ENCODE measurements at regions of chr1 and their contacts with region 1.

Region 1: GRCh38 chr1:31789259-31790065 is 25.3 kb upstream of the ADGRB2 start:
- DNase-seq: peak; percentile 77 to 98
- H3K4me3 ChIP-seq: peak overlapping the region; percentile 62 to 71
- H3K27ac ChIP-seq: peak overlapping the region; percentile 73 to 80
- H3K4me1 ChIP-seq: peaks cover 0 to 7% of the 10 kb centered on the region in 2 donors
- H3K27me3 ChIP-seq: no peaks in the 10 kb centered on the region
- CTCF ChIP-seq: peak; percentile 90 to 99 (median 98)

Region 2: DNA sequence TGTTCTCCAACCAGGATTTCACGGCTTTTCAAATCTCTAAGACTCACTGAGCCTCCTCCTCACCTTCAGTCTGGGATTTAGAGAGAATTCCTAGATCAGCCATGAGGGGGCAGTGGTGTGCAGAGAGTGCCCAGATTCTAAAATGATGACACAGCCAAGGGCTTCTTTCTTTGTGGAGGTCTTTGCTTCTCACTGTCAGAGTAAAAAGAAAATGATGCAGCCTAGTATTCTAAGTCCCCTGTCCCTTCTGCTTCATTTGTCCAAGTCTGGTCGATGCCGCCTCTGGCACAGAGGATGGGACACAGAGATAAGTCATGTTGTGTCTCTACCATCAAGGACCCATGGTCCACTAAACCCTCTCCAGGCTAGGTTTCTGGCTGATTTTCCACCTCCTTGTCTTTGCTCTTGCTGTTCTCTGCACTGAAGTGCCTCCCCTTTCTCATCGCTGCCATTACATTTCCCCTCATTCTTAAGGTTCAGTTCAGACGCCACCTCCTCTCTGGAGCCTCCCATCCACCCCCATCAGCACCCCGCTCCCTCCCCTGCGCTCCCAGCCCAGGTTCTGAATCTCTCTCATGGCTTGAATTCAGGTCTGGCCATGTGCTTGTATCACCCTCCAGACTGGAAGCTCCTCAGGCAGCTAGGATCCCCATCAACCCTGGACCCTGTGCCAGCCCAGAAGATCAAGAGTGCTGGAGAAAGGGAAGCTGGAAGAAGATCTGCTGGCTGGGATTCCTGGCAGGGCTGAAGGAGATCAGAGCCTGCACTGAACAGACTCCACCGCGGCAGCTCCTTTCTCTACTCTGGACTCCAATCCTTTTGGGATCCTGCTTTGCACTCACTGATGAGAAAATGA is 225.1 kb before region 1 on chr1:
- intact Hi-C with region 1: loop called (anchors 2 kb)
- DNase-seq: peak in 1 of 2 donors; percentile 81
- H3K4me3 ChIP-seq: no peak overlapping the region
- H3K27ac ChIP-seq: peak overlapping the region; percentile 2 to 58
- H3K4me1 ChIP-seq: peaks cover 0 to 32% of the 10 kb centered on the region in 2 donors
- H3K27me3 ChIP-seq: no peaks in the 10 kb centered on the region
- CTCF ChIP-seq: peak; percentile 79 to 92 (median 90)

Region 3: DNA sequence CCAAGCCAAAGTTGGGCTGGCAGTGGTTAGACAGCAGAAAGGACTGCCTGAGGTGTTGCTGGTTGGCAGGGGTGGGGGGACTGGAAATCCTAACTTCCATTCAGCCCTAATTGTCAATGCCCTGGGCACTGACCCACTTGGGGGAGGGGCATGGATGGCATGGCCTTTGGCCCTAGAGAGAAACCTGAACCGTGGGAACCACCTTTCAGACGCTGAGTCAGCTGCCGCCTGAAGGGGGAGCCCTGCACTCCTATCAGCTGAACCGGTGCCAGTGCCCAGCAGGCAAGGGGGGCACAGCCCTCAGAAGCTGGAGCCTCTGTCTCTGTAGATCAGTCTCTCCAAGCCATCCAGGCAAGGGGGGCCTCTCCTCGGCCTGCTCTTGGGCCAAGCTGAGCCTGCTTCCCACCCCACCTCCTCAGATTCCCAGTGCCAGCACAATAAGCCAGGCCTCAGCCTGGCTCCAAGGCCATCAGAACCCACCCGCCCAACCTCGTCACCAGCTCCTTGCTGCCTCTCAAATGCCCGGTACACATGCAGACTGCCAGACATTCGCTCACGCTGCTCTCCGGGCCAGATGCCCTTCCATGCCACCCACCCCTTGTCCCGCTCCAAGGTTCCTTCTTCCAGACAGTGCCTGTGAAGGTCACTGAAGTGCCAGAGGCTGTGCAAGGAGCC is 201.6 kb before region 1 on chr1:
- intact Hi-C with region 1: loop called (anchors 2 kb)
- DNase-seq: peak; percentile 70 to 94
- H3K4me3 ChIP-seq: peak overlapping the region; percentile 46 to 56
- H3K27ac ChIP-seq: peak overlapping the region; percentile 93 to 97
- H3K4me1 ChIP-seq: peaks cover 45 to 77% of the 10 kb centered on the region in 2 donors
- H3K27me3 ChIP-seq: no peaks in the 10 kb centered on the region
- CTCF ChIP-seq: peak; percentile 28 to 69 (median 65)

Region 4: DNA sequence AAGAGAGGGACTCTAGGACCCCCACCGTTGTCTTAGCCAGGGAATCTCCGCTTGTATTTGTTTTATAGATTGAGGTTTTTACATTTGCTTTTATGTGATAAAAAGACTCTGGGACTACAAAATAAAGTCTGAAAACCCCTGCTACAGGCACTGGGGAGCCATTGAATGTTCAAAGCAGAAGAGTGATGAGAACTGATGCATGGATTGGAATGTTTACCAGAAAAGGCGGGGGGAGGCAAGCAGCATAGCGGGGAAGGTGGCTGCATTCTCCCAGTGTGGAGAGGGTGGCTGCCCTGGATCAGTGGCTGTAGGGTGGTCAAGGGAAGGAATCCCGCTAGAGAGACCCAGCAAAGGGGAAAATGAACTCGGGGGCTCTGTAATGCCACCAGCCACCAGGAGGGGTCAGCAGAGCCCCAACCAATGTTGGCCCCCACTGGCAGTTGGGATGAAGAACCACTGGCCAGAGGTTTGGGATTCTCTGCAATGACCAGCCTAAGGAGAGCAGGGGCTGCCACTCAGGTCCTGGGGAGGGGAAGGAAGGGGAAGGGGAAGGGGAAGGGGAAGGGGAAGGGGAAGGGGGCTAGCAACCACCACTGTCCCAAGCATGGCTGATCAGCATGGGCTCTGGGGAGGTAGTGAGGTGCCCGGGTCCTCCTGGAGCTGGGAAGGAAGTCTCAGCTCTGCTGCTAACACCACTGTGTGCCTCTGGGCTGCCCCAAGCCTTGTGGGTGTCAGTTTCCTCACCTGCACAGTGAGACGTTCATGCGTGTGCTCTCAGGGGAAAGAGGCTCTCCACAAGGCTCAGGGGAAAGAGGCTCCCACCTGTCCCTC is 125.6 kb before region 1 on chr1:
- intact Hi-C with region 1: loop called (anchors 1 kb)
- DNase-seq: peak in 1 of 2 donors; percentile 81
- H3K4me3 ChIP-seq: no peak overlapping the region
- H3K27ac ChIP-seq: no peak overlapping the region
- H3K4me1 ChIP-seq: peaks cover 0 to 3% of the 10 kb centered on the region in 2 donors
- H3K27me3 ChIP-seq: no peaks in the 10 kb centered on the region
- CTCF ChIP-seq: peak; percentile 89 to 98 (median 90)

Region 5: GRCh38 chr1:31701137-31701736 is 88.2 kb before region 1 on chr1:
- intact Hi-C with region 1: no loop called
- DNase-seq: peak; percentile 57 to 95
- H3K4me3 ChIP-seq: peak overlapping the region in 1 of 2 donors; percentile 65
- H3K27ac ChIP-seq: peak overlapping the region; percentile 90 to 94
- H3K4me1 ChIP-seq: peaks cover 8 to 63% of the 10 kb centered on the region in 2 donors
- H3K27me3 ChIP-seq: no peaks in the 10 kb centered on the region
- CTCF ChIP-seq: no peak

Region 6: GRCh38 chr1:31745096-31745945 is 44.1 kb before region 1 on chr1:
- intact Hi-C with region 1: loop called (anchors 5 kb)
- DNase-seq: peak in 1 of 2 donors; percentile 81
- H3K4me3 ChIP-seq: no peak overlapping the region
- H3K27ac ChIP-seq: no peak overlapping the region
- H3K4me1 ChIP-seq: peaks cover 0 to 3% of the 10 kb centered on the region in 2 donors
- H3K27me3 ChIP-seq: no peaks in the 10 kb centered on the region
- CTCF ChIP-seq: peak; percentile 39 to 75 (median 66)

Region 7: GRCh38 chr1:31762726-31763670 is 26.5 kb before region 1 on chr1:
- intact Hi-C with region 1: loop called (anchors 1 kb)
- DNase-seq: peak in 1 of 2 donors; percentile 82
- H3K4me3 ChIP-seq: peak overlapping the region; percentile 63 to 86
- H3K27ac ChIP-seq: no peak overlapping the region
- H3K4me1 ChIP-seq: peaks cover 10 to 31% of the 10 kb centered on the region in 2 donors
- H3K27me3 ChIP-seq: no peaks in the 10 kb centered on the region
- CTCF ChIP-seq: peak; percentile 62 to 73 (median 68)

Region 8: DNA sequence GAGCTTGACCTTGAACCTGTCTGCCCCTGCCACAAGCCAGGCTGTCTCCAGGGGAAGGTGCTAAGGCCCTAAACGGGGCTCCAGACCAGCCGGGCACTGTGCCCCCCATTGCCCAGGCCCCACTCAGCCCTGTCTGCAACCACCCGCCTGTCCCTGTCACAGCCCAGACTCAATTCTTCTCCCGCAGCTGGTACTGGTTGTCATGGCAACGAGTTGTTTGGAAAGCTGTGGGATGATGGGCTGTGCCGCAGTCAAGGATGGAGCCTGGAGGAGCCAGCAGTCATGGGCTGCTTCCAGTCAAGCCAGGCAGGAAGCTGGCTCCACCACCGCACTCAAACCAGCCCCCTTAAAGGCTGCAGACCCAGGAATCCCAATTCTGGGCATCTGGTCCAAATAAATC is 22.1 kb after region 1 on chr1:
- intact Hi-C with region 1: no loop called
- DNase-seq: peak in 1 of 2 donors; percentile 52
- H3K4me3 ChIP-seq: no peak overlapping the region
- H3K27ac ChIP-seq: no peak overlapping the region
- H3K4me1 ChIP-seq: no peaks in the 10 kb centered on the region
- H3K27me3 ChIP-seq: no peaks in the 10 kb centered on the region
- CTCF ChIP-seq: no peak

Region 9: GRCh38 chr1:31822766-31823165 is 33.3 kb after region 1 on chr1:
- intact Hi-C with region 1: no loop called
- DNase-seq: no peak
- H3K4me3 ChIP-seq: no peak overlapping the region
- H3K27ac ChIP-seq: no peak overlapping the region
- H3K4me1 ChIP-seq: no peaks in the 10 kb centered on the region
- H3K27me3 ChIP-seq: no peaks in the 10 kb centered on the region
- CTCF ChIP-seq: no peak